Common myeloid progenitor, CD34-positive (primary cell): ENCODE measurements at regions of chr11 and their contacts with region 1.

Region 1: GRCh38 chr11:35087648-35088047 is 51.3 kb upstream of the CD44 start:
- DNase-seq: peak in 2 of 3 donors; percentile 79 to 83
- H3K4me3 ChIP-seq: no peak overlapping the region
- H3K27ac ChIP-seq: no peak overlapping the region
- H3K4me1 ChIP-seq: peaks cover 14 to 44% (median 27%) of the 10 kb centered on the region in 4 experiments
- H3K27me3 ChIP-seq: no peaks in the 10 kb centered on the region

Region 2: GRCh38 chr11:35103366-35104208 is 15.9 kb after region 1 on chr11:
- CTCF ChIA-PET with region 1: interaction called, 10 read pairs
- POLR2A ChIA-PET with region 1: no interaction called
- DNase-seq: no peak
- H3K4me3 ChIP-seq: no peak overlapping the region
- H3K27ac ChIP-seq: no peak overlapping the region
- H3K4me1 ChIP-seq: peaks cover 14 to 27% (median 26%) of the 10 kb centered on the region in 4 experiments
- H3K27me3 ChIP-seq: no peaks in the 10 kb centered on the region

Region 3: DNA sequence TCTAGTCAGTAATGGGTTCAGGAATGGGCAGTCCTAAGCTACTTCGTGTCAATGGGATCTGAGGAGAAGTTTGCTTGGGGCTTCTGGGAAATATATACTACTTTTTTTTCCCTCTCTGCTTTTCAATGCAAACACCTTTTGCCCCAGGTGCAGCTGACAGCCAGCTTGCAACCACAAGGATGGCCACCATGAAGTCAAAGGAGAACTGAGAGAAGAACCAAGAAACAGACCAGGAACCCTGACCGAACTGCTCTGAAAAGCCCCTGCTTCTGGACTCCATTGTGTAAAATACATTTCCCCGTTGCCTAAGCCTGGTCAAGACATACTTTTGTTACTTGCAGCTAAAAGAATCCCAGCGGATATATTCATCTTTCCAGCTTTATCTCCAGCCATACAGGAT is 31.3 kb after region 1 on chr11:
- CTCF ChIA-PET with region 1: no interaction called
- POLR2A ChIA-PET with region 1: no interaction called
- DNase-seq: no peak
- H3K4me3 ChIP-seq: no peak overlapping the region
- H3K27ac ChIP-seq: no peak overlapping the region
- H3K4me1 ChIP-seq: peaks cover 0 to 7% (median 5%) of the 10 kb centered on the region in 4 experiments
- H3K27me3 ChIP-seq: no peaks in the 10 kb centered on the region